ENCODE measurements at regions of chr2 and their contacts with region 1.

Region 1: GRCh38 chr2:133674433-133675331 is 106.4 kb upstream of the NCKAP5 start:
- DNase-seq: peak; percentile 55
- ATAC-seq: peak; percentile 75

Region 2: GRCh38 chr2:133765658-133766057 is 91.0 kb after region 1 on chr2:
- intact Hi-C with region 1: loop called (anchors 5 kb)
- DNase-seq: peak; percentile 40
- ATAC-seq: peak; percentile 93